PC-3 (cell line): ENCODE measurements at regions of chr3 and their contacts with region 1.

Region 1: DNA sequence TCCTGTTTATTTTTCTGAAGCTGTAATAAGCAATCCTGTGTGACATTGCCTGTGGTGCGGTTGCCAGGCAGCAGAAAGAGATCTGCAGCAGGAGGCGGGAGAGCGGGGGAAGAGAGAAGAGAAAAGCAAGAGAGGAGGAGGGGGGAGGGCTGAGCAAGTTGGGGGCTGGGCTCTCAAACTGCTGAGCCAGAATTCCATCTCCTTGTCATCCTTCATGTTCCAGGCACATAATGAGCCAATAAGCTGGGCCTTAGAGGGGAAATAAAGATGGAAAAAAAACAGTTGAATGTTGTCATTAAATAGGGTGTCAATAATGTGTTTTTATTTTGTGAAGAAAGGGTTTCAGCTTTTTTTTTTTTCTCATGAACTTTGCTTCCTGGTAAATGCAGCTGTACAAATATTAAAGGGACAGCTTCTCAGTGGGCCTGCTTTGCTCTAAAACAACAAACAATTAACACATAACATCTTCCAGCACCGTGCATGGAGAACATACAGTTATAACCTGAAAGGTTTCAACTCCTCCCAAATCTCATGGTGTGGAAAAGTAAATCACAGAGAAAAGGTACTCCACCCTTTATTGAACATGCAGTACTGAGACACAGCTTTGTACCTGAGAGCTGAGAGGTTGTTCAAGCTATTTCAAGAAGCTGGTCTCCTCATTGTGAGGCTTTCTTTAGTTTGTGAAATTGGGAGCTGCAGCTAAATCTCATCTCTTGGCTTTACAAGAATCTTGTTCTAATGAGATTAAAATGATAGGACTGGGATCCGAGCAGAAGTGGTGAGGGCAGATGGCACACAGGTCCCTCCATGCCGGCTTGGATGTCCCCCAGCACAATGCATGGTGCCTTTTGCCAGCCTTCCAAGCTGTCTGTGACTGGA is 451.1 kb upstream of the KCNMB2 start:
- DNase-seq: no peak
- ATAC-seq: no peak
- H3K4me3 ChIP-seq: no peak overlapping the region
- H3K27ac ChIP-seq: no peak overlapping the region
- H3K4me1 ChIP-seq: no peaks in the 10 kb centered on the region; the same call in 1 of the 2 replicates
- H3K27me3 ChIP-seq: no peaks in the 10 kb centered on the region
- CTCF ChIP-seq: no peak

Region 2: DNA sequence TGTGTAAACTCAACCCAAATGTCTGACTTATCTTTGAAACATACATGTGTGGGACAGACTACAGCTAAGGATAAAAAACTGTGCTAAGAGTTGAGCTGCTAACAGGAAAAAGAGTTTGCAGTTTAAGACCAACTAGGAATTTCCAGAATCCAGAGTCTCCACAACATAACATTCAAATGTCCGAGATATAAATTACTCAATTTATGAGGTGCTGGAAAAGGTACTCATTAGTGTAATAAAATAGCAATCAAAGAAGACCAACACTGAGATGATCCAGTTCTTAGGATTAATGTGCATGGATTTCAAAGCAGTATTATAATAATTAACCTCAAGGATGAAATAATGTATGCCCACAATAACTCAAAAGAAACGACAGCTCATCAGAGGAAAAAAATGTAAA is 24.5 kb after region 1 on chr3:
- CTCF ChIA-PET with region 1: no interaction called
- POLR2A ChIA-PET with region 1: no interaction called
- intact Hi-C with region 1: loop called (anchors 2 kb)
- DNase-seq: no peak
- ATAC-seq: no peak
- H3K4me3 ChIP-seq: no peak overlapping the region
- H3K27ac ChIP-seq: no peak overlapping the region
- H3K4me1 ChIP-seq: no peaks in the 10 kb centered on the region
- H3K27me3 ChIP-seq: no peaks in the 10 kb centered on the region
- CTCF ChIP-seq: no peak

Region 3: GRCh38 chr3:178275793-178276192 is 190.6 kb after region 1 on chr3:
- CTCF ChIA-PET with region 1: no interaction called
- POLR2A ChIA-PET with region 1: no interaction called
- intact Hi-C with region 1: no loop called
- DNase-seq: peak; percentile 7
- ATAC-seq: no peak
- H3K4me3 ChIP-seq: no peak overlapping the region
- H3K27ac ChIP-seq: peak overlapping the region; percentile 2
- H3K4me1 ChIP-seq: peaks cover 24% of the 10 kb centered on the region
- H3K27me3 ChIP-seq: no peaks in the 10 kb centered on the region
- CTCF ChIP-seq: no peak